ENCODE measurements at regions of chr1 and their contacts with region 1.

Region 1: DNA sequence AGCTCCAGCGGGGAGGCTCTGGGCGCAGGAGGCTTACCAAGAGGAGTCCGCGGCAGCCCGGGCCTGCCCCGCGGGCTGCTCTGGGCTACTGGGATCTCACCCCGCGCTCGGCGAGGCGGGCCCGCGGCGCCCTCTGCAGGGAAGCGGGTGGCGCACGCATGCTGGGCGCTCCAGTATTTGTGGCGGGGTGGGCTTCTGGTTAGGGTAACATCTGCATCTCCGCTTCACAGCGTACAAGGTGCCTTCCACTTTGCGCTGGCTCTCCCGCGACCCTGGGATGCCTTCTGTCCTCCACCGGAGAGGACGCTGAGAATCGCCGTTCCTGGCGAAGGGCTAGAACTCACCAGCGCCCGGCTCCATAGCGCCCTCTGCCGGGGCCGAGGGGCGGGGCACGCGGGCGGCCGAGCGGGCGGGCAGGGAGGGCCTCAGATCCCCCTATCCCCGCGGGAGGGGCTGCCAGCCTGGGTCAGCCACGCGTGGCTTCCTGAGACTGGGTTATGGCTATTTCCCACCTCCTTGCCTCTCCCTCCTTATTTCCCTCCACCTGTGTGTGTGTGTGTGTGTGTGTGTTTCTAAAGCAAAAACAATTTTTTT is 46.6 kb upstream of the CTBS start:
- DNase-seq: peak; percentile 81
- ATAC-seq: peak; percentile 96
- H3K4me3 Mint-ChIP-seq: peak overlapping the region; percentile 84
- H3K27ac Mint-ChIP-seq: peak overlapping the region; percentile 83
- H3K4me1 Mint-ChIP-seq: peaks cover 13% of the 10 kb centered on the region
- H3K27me3 Mint-ChIP-seq: peaks cover 3% of the 10 kb centered on the region

Region 2: GRCh38 chr1:84208935-84209334 is 411.9 kb before region 1 on chr1:
- CTCF ChIA-PET with region 1: no interaction called
- POLR2A ChIA-PET with region 1: no interaction called
- DNase-seq: no peak
- ATAC-seq: no peak
- H3K4me3 Mint-ChIP-seq: no peak overlapping the region
- H3K27ac Mint-ChIP-seq: no peak overlapping the region
- H3K4me1 Mint-ChIP-seq: peaks cover 8% of the 10 kb centered on the region
- H3K27me3 Mint-ChIP-seq: no peaks in the 10 kb centered on the region

Region 3: DNA sequence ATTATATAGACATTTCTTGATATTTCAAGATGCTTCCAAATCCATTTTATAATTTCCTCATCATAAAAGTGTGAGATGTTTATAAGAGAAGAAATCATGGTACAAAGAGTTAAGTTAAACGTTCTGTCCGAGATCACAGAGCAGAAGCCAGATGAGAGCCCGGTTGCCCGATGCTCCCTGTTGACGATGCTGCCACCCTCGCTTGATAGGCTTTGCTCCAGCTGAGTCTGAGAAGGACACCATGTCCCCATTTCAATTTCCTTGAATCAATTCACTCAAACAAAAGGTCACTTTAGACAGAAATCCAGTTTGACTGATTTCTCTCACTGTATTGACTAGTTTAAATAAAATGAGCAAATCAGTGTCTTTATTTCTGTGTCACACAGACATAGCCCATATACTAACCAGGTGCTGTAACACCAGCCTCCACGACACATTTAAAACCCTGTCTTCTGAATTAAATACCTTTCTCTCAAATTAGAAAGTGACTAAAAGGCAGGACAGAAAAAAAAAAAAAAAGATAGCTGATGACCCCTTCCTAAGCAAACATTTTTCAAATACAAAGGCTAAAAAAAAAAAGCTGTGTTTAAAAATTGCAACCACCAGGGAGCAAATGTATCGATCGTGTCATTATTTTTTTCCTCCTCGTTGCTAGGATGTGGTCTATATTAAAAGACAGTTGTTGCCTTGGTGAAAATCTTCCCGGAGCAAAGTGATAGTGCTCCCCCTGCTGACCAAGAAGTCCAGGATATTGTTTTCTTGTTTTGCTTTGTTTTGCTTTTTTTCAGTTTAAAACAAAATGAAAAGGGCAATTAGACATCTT is 187.3 kb before region 1 on chr1:
- CTCF ChIA-PET with region 1: interaction called, 24 read pairs
- POLR2A ChIA-PET with region 1: no interaction called
- DNase-seq: peak; percentile 80
- ATAC-seq: peak; percentile 74
- H3K4me3 Mint-ChIP-seq: peak overlapping the region; percentile 66
- H3K27ac Mint-ChIP-seq: peak overlapping the region; percentile 58
- H3K4me1 Mint-ChIP-seq: peaks cover 10% of the 10 kb centered on the region
- H3K27me3 Mint-ChIP-seq: no peaks in the 10 kb centered on the region

Region 4: DNA sequence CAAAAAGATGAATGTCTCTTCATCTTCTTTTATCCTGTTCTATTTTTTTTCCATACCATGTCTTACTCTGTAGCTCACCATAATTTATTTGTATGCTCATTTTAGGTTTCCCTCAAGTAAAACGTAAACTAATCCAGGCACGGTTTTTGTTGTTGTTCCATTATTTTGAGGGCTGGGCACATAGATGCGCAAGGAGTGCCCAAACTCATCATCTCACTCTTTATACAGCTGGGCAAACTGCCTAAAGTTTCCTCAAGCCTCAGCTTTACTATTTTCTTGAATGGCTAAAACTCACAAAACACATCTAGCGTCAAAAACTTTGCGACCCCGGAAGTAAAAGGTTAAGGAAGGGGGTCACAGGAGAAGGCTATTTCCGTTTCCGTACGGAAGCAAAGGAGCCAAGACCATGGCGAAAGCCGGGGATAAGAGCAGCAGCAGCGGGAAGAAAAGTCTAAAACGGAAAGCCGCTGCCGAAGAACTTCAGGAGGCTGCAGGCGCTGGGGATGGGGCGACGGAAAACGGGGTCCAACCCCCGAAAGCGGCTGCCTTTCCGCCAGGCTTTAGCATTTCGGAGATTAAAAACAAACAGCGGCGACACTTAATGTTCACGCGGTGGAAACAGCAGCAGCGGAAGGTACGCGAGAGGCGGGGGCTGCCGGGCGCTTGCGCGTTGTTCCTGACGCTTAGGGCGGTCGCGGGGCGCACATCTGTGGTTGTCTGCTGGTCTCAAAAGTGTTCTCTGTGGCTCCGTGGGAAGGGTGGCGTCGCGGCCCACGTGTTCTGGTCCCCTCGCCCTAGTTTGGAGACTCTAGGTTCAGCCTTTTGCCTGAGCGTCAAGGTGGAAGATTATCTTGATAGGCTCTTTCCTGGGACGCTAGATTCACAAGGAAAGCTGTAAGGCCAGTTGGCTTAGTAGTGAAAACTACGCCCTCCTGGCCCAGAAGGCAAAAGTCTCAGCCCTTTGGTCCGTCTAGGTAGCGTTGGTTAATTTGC is 141.6 kb before region 1 on chr1 and contains the start of gene RPF1:
- CTCF ChIA-PET with region 1: interaction called, 16 read pairs
- POLR2A ChIA-PET with region 1: interaction called, 3 read pairs
- DNase-seq: peak; percentile 84
- ATAC-seq: peak; percentile 98
- H3K4me3 Mint-ChIP-seq: peak within 1 kb of the TSS; percentile 99
- H3K27ac Mint-ChIP-seq: peak within 1 kb of the TSS; percentile 99
- H3K4me1 Mint-ChIP-seq: peaks cover 32% of the 10 kb centered on the region
- H3K27me3 Mint-ChIP-seq: peaks cover 20% of the 10 kb centered on the region
- total RNA-seq, gene RPF1: 41.6 to 44.1 TPM

Region 5: GRCh38 chr1:84573967-84574842 is 46.6 kb before region 1 on chr1 and contains the start of gene CTBS:
- CTCF ChIA-PET with region 1: interaction called, 16 read pairs
- POLR2A ChIA-PET with region 1: interaction called, 9 read pairs
- DNase-seq: peak; percentile 90
- ATAC-seq: peak; percentile 95
- H3K4me3 Mint-ChIP-seq: peak within 1 kb of the TSS; percentile 94
- H3K27ac Mint-ChIP-seq: peak within 1 kb of the TSS; percentile 99
- H3K4me1 Mint-ChIP-seq: peaks cover 33% of the 10 kb centered on the region
- H3K27me3 Mint-ChIP-seq: no peaks in the 10 kb centered on the region
- total RNA-seq, gene CTBS: 12.3 to 12.7 TPM